ENCODE measurements at regions of chr17 and their contacts with region 1.

Region 1: DNA sequence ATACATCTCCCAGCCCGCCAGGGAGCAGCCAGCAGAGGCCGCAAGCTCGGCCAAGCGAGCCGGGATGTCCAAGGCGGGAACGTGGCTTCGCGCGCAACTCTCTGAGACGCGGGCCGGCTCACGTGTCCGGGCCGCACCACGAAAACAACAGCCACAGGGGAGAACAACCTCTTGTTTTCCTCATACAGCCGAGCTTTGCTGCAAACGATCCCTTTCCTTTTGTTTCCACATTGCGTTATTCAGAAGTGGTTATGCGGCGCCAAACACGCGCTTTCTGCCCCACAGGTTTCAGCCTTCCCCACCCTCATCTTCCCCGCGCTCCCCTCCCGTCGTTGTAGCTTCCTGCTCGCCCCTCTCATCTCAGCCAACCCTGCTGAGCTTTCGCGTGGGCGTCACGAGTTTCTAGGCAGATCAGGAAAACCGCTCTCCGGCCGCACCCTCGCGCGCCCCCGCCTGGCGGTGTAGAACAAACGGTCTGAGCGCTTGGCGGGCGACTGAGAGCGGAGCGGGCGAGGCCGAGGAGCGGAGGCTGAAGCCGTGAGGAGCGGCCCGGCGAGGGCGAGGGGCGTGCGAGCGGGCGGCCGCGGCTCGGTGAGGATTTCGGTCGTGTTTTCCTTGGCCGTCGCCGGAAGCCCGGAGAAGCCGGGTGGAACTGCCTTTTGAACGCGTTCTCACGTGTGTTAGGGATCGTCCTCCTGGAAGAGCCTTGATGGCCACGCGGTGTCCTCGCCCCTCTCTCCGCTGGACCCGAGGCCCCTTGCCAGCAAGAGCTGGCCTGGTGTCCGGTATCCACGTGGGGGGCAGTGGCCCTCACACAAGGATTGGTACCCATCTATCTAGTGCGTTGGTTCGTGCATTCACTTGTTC is 6.6 kb upstream of the SMARCD2 start:
- DNase-seq: peak; percentile 96
- H3K4me3 Mint-ChIP-seq: peak overlapping the region; percentile 61
- H3K27ac Mint-ChIP-seq: peak overlapping the region; percentile 86
- H3K4me1 Mint-ChIP-seq: peaks cover 27% of the 10 kb centered on the region
- H3K27me3 Mint-ChIP-seq: peaks cover 15% of the 10 kb centered on the region

Region 2: DNA sequence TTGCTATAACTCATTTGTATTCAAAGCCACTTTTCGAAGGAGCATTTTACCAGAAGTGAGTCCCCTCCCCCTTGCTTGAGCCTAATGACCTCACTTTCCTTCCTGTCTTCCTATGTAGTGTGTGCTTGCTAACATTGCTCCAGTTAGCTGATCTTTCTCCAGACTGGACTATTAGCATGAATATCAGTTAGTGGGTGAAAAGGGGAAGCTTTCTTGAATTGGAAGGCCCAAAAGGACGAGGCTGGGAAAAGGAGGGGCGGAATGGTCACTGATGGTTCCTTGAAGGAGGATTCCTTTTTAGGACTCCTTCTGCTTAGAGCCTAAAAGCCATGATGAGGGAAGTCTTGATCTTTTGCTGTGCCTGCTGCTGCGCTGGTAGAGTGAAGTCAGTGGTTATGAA is 214.9 kb before region 1 on chr17:
- CTCF ChIA-PET with region 1: no interaction called
- POLR2A ChIA-PET with region 1: no interaction called
- DNase-seq: no peak
- H3K4me3 Mint-ChIP-seq: no peak overlapping the region
- H3K27ac Mint-ChIP-seq: peak overlapping the region; percentile 1
- H3K4me1 Mint-ChIP-seq: peaks cover 16% of the 10 kb centered on the region
- H3K27me3 Mint-ChIP-seq: no peaks in the 10 kb centered on the region

Region 3: DNA sequence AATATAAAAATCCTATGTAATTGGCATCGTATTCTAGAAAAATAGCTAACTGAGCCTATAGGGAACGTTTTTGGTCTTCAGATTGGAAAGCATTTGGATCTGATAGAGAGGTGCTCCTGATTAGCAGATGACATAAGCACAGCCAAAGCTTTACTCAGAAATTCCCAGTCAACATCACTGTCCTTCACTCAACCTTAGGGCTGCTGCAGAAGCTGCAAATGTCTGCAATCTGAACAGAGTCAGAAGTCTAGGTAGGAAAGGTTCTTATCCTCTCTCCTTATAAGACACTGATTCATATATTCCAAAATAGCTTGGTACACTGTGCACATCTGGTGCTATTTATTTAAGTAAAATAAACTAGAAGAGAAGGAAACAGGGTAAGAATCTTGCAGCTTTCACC is 126.7 kb before region 1 on chr17:
- CTCF ChIA-PET with region 1: no interaction called
- POLR2A ChIA-PET with region 1: no interaction called
- DNase-seq: no peak
- H3K4me3 Mint-ChIP-seq: no peak overlapping the region
- H3K27ac Mint-ChIP-seq: no peak overlapping the region
- H3K4me1 Mint-ChIP-seq: peaks cover 1% of the 10 kb centered on the region
- H3K27me3 Mint-ChIP-seq: no peaks in the 10 kb centered on the region

Region 4: GRCh38 chr17:63859257-63859656 is 10.2 kb after region 1 on chr17:
- CTCF ChIA-PET with region 1: interaction called, 45 read pairs
- POLR2A ChIA-PET with region 1: interaction called, 10 read pairs
- DNase-seq: no peak
- H3K4me3 Mint-ChIP-seq: no peak overlapping the region
- H3K27ac Mint-ChIP-seq: no peak overlapping the region
- H3K4me1 Mint-ChIP-seq: no peaks in the 10 kb centered on the region
- H3K27me3 Mint-ChIP-seq: peaks cover 27% of the 10 kb centered on the region

Region 5: GRCh38 chr17:63939884-63940283 is 90.8 kb after region 1 on chr17:
- CTCF ChIA-PET with region 1: no interaction called
- POLR2A ChIA-PET with region 1: no interaction called
- DNase-seq: no peak
- H3K4me3 Mint-ChIP-seq: no peak overlapping the region
- H3K27ac Mint-ChIP-seq: no peak overlapping the region
- H3K4me1 Mint-ChIP-seq: peaks cover 9% of the 10 kb centered on the region
- H3K27me3 Mint-ChIP-seq: peaks cover 17% of the 10 kb centered on the region